A673 (cell line): ENCODE measurements at regions of chr5 and their contacts with region 1.

Region 1: GRCh38 chr5:113678924-113679575 is 165.6 kb downstream of the YTHDC2 start:
- DNase-seq: peak; percentile 70
- H3K4me3 ChIP-seq: no peak overlapping the region
- H3K27ac ChIP-seq: no peak overlapping the region
- H3K4me1 ChIP-seq: no peaks in the 10 kb centered on the region
- H3K27me3 ChIP-seq: no peaks in the 10 kb centered on the region
- CTCF ChIP-seq: peak; percentile 83

Region 2: DNA sequence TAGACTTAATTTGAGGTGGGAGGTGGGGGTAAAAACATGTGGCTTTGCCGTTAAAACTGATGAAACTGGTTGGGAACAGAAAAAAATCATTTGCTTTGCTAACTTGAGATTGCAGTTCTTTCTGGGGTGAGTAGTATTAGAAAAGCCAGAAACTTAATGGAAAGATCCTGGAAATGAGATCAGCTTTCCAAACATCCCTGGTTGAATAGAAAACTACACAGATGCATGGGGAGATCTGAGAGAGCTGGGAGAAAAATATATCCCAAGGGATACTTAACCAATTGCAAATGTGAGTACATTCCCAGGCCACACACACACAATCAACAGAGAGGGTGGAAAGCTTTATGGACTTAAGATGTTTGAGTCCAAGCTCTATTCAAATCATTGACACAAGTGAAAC is 56.7 kb after region 1 on chr5:
- CTCF ChIA-PET with region 1: no interaction called
- POLR2A ChIA-PET with region 1: no interaction called
- intact Hi-C with region 1: no loop called
- DNase-seq: no peak
- H3K4me3 ChIP-seq: no peak overlapping the region
- H3K27ac ChIP-seq: no peak overlapping the region
- H3K4me1 ChIP-seq: no peaks in the 10 kb centered on the region
- H3K27me3 ChIP-seq: peaks cover 12% of the 10 kb centered on the region
- CTCF ChIP-seq: no peak

Region 3: GRCh38 chr5:113897748-113898147 is 218.7 kb after region 1 on chr5:
- CTCF ChIA-PET with region 1: no interaction called
- POLR2A ChIA-PET with region 1: no interaction called
- intact Hi-C with region 1: loop called (anchors 10 kb)
- DNase-seq: no peak
- H3K4me3 ChIP-seq: no peak overlapping the region
- H3K27ac ChIP-seq: no peak overlapping the region
- H3K4me1 ChIP-seq: no peaks in the 10 kb centered on the region
- H3K27me3 ChIP-seq: peaks cover 12% of the 10 kb centered on the region
- CTCF ChIP-seq: no peak

Region 4: DNA sequence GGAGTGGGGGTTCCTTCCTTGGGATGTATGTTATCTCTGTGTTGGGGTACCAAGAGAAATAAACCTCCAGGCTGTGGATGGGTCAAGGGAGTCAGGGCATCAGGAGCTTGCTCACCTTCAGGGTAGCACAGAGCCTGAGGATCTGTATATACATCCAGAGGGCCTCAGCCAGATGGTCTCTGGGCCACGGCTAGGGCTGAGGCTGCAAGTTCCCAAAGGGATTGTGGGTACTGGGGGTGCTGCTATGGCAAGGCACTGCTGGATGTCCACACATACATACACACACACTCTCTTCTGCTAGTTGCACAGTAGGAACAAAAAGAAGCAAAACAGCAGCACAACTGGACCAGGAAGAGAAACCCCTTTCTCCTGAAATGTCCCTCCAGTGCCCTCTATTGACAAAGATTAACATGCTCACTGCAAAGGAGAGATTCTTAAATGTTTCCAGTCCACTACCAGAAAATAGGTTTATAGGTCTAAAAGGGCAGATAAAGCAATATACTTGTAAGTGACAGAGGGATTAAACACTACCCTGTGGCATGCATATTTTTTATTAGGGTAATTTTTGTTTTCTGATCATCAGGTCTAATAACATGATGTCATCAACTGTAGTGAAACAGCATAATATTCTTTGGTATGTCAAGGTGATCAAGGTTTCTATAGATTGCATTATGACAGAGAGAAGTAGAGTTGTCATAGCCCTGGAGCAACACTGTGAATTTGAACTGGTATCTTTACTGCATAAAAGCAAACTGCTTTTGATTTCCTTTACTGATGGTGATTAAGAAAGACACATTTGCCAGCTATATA is 626.6 kb after region 1 on chr5:
- CTCF ChIA-PET with region 1: no interaction called
- POLR2A ChIA-PET with region 1: no interaction called
- intact Hi-C with region 1: loop called (anchors 5 kb)
- DNase-seq: peak; percentile 8
- H3K4me3 ChIP-seq: no peak overlapping the region
- H3K27ac ChIP-seq: no peak overlapping the region
- H3K4me1 ChIP-seq: no peaks in the 10 kb centered on the region
- H3K27me3 ChIP-seq: no peaks in the 10 kb centered on the region
- CTCF ChIP-seq: peak; percentile 47

Region 5: DNA sequence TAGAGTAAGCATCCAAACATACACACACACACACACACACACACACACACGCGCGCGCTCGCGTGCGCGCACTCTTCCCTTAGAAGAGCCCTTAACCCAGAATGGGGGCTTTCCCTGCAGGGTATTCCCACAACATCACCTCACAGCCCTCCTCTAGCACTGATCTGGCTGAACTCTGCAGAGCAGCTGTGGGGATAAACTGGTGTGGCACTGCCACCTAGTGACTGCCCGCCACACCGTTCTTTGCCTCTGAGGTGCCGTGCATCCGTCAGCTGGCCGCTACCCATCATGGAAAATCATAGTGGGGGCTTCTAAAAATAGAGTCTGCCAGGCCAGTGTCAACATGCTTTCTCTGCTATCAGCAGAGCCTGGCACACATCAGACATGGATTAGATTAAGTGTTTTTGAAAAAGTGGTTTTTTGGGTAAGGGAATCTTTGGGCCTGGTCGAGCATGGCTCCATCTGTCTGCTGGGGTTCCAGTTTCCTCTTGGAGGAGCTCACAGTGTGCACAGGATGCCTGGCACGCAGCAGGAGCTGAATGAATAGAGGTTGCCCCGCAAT is 770.9 kb after region 1 on chr5:
- CTCF ChIA-PET with region 1: interaction called, 8 read pairs
- POLR2A ChIA-PET with region 1: no interaction called
- intact Hi-C with region 1: loop called (anchors 2 kb)
- DNase-seq: peak; percentile 65
- H3K4me3 ChIP-seq: no peak overlapping the region
- H3K27ac ChIP-seq: no peak overlapping the region
- H3K4me1 ChIP-seq: no peaks in the 10 kb centered on the region
- H3K27me3 ChIP-seq: peaks cover 14% of the 10 kb centered on the region
- CTCF ChIP-seq: peak; percentile 87

Region 6: DNA sequence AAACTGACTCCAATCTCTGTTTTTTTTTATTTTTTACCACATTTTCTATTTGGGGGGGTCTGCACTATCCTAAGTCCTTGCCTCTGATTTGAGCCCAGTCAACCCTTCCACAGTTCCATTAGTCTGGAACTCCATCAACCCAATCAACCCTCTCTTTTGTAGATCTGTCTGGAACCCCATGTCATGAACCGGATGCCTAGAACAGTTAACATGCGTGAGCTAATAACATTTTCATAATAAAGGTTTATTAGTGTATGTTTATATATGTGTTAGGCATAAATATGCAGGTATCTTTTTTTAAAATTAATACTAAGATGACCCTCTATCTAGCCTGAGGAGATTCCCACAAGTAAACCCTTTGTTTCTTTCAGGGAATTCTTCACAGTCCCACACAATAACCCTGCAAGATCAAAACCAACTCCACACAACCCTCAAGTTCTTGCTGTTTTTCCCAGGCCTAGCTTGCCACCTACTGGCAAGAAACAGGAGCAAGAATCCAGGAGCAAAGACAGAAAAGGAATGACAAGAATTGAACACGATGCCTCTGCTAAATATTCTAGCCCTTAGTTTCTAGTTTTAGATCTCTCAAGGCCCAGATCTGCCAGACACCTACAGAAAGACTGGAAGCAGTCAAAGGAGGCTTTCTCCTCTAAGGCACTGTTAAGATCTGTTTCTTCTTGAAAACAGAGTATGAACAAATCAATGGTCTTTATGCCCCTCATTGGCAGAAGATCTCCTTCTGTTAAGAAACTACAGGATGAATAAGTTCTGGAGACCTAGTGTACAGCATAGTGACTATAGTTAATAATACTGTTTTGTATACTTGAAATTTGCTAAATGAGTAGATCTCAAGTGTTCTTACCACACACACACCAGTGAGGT is 1390.3 kb after region 1 on chr5:
- CTCF ChIA-PET with region 1: no interaction called
- POLR2A ChIA-PET with region 1: no interaction called
- intact Hi-C with region 1: loop called (anchors 5 kb)
- DNase-seq: peak; percentile 74
- H3K4me3 ChIP-seq: no peak overlapping the region
- H3K27ac ChIP-seq: no peak overlapping the region
- H3K4me1 ChIP-seq: no peaks in the 10 kb centered on the region
- H3K27me3 ChIP-seq: no peaks in the 10 kb centered on the region
- CTCF ChIP-seq: peak; percentile 79